Mammary epithelial cell (primary cell): ENCODE measurements at regions of chr2 and their contacts with region 1.

Region 1: DNA sequence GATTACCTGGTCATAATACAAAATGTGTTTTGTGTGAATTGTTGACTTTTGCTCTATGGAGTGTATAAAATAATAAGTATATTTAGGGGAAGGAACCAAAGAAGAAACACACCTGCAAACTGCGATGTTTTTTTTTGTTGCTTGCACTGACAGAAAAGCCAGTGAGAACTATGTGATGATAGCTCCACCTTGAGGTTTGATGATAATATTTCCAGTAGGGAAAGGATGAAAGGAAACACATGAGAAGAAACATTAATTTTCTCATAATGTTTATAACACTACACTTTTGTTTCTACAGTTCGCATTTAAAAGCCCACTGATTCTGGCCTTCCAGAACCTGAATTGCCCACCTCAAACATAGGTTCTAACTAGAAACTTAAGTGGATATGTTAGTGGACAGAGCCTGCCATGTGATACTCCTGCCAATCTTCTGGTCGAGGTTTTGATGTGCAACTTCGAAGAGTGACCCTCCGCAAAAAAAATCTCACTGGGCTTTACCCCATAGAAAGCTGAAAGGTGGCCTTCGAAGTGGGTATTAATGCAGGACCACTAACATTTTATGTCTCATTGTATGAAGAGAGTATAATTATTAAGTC is 476.4 kb upstream of the SPHKAP start:
- DNase-seq: peak; percentile 23
- H3K4me3 ChIP-seq: no peak overlapping the region
- H3K27ac ChIP-seq: no peak overlapping the region
- H3K4me1 ChIP-seq: no peaks in the 10 kb centered on the region
- H3K27me3 ChIP-seq: peaks cover 10% of the 10 kb centered on the region
- CTCF ChIP-seq: peak; percentile 46 to 60

Region 2: DNA sequence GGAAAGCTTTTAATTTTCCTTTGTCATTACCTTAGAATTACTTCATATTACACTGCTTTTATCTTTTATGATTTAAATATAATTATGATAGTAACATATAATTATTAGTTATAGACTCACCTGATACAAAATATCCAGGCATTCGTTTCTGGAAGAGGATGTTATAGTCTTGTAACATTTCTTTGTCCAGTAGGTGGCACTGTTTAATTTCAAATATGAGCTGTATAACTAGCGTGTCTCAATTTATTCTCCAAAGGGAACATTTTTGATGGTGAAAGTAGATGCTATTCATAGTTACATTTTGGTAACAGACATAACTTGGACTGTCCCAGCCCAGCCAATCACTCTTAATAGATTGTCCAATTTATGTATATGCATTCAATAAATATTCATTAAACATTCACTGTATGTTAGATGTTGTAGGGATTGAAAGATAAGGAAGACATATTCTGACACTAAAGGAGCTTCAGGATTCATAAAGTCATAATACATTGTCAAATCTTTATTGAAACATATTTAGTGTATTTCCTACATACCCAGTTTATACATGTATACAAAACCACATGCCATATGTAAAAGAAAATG is 767.3 kb before region 1 on chr2:
- CTCF ChIA-PET with region 1: no interaction called
- dilution Hi-C with region 1: no loop called
- in situ Hi-C with region 1: loop called in 1 of 2 experiments (anchors 25 kb)
- intact Hi-C with region 1: loop called (anchors 1 kb)
- DNase-seq: peak; percentile 42
- H3K4me3 ChIP-seq: no peak overlapping the region
- H3K27ac ChIP-seq: no peak overlapping the region
- H3K4me1 ChIP-seq: peaks cover 10% of the 10 kb centered on the region
- H3K27me3 ChIP-seq: no peaks in the 10 kb centered on the region
- CTCF ChIP-seq: peak; percentile 46 to 54

Region 3: DNA sequence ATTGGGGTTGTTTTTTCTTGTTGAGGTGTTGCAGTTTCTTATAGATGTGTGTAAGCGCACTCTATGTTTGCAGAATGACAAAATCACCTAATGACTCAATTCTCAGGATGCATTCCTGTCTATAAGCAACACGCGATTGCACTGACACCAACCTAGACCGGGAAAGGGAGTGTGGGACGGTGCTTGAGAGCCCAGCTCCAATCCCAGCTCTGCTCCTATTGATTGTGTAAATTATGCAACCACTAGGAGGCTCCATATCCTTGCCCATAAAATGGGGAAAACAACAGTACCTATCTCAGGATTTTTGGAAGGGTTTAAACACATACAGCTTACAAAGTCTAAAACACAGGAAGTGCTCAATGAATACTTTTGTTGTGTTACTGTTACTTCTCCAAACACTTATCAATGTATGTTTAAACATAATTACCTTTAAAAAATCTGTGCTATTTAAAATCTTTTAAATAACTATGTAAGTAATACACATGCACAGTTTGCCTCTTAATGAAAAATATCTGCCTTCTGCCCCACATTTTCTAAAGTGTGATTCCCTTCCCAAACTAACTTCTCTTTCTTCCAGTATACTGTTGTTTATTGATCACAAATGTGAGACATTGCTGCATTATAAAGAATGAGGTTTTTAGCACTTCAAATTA is 608.9 kb before region 1 on chr2:
- CTCF ChIA-PET with region 1: interaction called, 3 read pairs
- dilution Hi-C with region 1: no loop called
- in situ Hi-C with region 1: loop called (anchors 10 to 25 kb)
- intact Hi-C with region 1: loop called (anchors 1 kb)
- DNase-seq: peak; percentile 59
- H3K4me3 ChIP-seq: no peak overlapping the region
- H3K27ac ChIP-seq: no peak overlapping the region
- H3K4me1 ChIP-seq: no peaks in the 10 kb centered on the region
- H3K27me3 ChIP-seq: no peaks in the 10 kb centered on the region
- CTCF ChIP-seq: peak; percentile 58 to 73

Region 4: GRCh38 chr2:228063558-228063957 is 594.3 kb before region 1 on chr2:
- CTCF ChIA-PET with region 1: no interaction called
- dilution Hi-C with region 1: no loop called
- in situ Hi-C with region 1: loop called (anchors 10 to 25 kb)
- intact Hi-C with region 1: no loop called
- DNase-seq: peak; percentile 12
- H3K4me3 ChIP-seq: no peak overlapping the region
- H3K27ac ChIP-seq: no peak overlapping the region
- H3K4me1 ChIP-seq: no peaks in the 10 kb centered on the region
- H3K27me3 ChIP-seq: no peaks in the 10 kb centered on the region
- CTCF ChIP-seq: no peak

Region 5: DNA sequence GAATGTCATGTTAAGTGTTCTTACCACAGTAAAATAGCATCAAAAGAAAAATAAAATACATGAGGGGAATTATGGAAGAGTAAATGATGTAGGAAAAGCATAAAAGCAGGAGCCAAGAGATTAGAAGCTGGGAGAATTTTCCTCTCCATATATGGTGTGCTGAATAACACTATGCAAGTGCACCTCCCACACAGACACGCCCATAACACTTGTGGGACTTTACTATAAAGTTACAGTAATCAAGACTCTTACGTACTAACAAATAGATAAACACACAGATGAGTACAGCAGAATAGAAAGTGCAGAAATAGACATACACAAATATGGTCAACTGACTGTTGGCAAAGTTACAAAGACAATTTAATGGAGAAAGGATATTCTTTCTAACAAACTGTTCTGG is 460.4 kb before region 1 on chr2:
- CTCF ChIA-PET with region 1: no interaction called
- dilution Hi-C with region 1: no loop called
- in situ Hi-C with region 1: no loop called
- intact Hi-C with region 1: no loop called
- DNase-seq: no peak
- H3K4me3 ChIP-seq: no peak overlapping the region
- H3K27ac ChIP-seq: no peak overlapping the region
- H3K4me1 ChIP-seq: no peaks in the 10 kb centered on the region
- H3K27me3 ChIP-seq: no peaks in the 10 kb centered on the region
- CTCF ChIP-seq: no peak